Dendritic cell treated with granulocyte-macrophage colony-stimulating factor and Interleukin-4, amounts not matched to agents 40 ng/mL and 50 ng/mL, for 4 days (primary cell): ENCODE measurements at regions of chr11 and their contacts with region 1.

Region 1: DNA sequence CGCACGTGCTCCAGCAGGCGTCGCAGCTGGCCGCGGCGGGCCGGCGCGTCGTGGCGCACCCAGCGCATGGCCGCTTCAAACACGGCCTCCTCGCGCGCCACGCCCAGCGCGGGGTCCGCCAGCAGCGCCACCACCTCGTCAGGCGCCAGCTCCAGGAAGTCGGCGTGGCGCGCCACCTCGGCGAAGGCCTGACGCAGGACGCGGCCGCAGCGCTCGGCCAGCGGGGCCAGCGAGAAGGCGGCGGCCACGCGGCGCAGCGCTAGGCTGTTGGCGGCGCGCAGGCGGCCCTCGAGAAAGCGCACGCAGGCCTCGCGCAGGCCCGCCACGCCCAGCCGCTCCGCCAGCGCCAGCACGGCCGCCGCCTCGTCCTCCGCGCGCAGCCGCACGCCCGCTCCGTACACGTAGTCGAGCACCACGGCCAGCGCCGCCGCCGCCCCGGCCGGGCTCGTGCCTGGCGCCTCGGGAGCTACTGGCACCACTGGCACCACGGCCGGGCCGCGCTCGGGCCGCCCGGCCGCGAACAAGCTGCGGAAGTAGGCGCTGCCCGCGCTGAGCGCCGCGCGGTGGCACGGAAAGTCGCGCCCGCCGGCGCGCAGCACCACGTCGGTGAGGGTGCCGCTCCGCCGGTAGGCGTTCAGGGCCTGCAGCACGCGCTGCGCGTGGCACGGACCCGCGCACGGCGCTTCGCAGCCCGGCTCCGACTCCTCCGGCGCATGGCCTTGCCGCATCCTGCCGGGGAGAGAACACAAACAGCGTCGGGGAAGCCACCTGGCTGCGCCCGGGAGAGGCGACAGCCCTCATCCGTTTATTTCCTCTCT is 2.9 kb downstream of the KLHL35 start:
- H3K4me3 Mint-ChIP-seq: peak overlapping the region; percentile 76
- H3K27ac Mint-ChIP-seq: peak overlapping the region; percentile 76
- H3K4me1 Mint-ChIP-seq: peaks cover 37% of the 10 kb centered on the region
- H3K27me3 Mint-ChIP-seq: peaks cover 64% of the 10 kb centered on the region

Region 2: GRCh38 chr11:75399344-75400145 is 30.6 kb before region 1 on chr11 and contains the start of gene RPS3:
- intact Hi-C with region 1: loop called (anchors 2 kb)
- H3K4me3 Mint-ChIP-seq: peak within 1 kb of the TSS; percentile 100
- H3K27ac Mint-ChIP-seq: peak within 1 kb of the TSS; percentile 99
- H3K4me1 Mint-ChIP-seq: peaks cover 49% of the 10 kb centered on the region
- H3K27me3 Mint-ChIP-seq: no peaks in the 10 kb centered on the region